Aorta (tissue), 5 donors: ENCODE measurements at regions of chr19 and their contacts with region 1.

Region 1: GRCh38 chr19:12333162-12334159 is at the start of gene ZNF563:
- DNase-seq: peak; percentile 98
- ATAC-seq: peak; percentile 100
- H3K4me3 ChIP-seq: peak within 1 kb of the TSS; percentile 59 to 81
- H3K27ac ChIP-seq: peak within 1 kb of the TSS; percentile 25 to 93
- H3K4me1 ChIP-seq: no peaks in the 10 kb centered on the region
- H3K27me3 ChIP-seq: no peaks in the 10 kb centered on the region
- total RNA-seq, gene ZNF563: 2.5 to 5.4 TPM

Region 2: DNA sequence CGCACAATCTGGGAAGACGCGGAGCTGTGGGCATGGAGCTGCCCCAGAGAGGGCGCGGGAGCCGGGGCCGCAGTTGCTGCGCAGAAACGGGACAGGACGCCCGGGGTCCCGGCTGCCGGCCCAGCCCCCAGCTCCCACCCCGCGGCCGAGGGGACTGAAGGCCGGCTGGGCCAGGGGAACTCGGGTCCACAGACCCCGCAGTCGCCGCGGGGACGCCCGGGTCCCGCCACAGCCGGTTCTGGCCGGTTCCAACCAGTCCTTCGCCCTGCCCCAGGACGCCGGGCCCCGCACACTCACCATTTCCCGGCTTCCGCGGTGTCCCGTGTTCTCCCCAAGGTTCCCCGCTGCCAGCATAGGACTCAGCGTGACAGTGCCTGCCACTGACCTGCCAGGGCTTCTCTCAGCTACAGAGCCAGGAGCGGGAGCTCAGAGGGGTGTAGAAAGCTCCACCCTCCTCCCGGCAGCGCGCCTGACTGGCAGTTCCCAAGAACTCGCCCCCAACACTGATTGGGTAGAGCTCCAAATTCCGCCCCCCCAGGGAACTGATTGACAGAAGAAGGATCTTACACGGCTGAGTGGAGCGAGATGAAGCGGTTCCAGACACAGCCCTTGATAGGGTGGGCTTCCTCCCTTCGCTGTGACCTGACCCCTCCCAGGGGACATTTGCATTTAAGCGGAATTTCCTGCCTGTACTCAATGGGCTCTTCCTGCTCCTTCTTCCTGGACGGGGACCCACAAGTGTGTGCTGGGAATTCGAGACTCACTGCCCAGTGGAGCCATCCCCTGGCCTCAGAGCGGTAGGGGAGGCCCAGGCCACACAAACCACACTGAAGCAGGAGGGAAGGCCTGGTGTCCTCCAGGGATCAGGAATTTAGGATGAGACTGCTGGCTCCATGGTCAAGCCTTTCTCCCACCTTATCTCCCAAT is 32.0 kb after region 1 on chr19 and contains the start of gene ZNF442:
- intact Hi-C with region 1: loop called (anchors 1 to 5 kb)
- DNase-seq: peak; percentile 97 to 98
- ATAC-seq: peak; percentile 98
- H3K4me3 ChIP-seq: peak within 1 kb of the TSS; percentile 78 to 79
- H3K27ac ChIP-seq: peak within 1 kb of the TSS; percentile 84 to 91
- H3K4me1 ChIP-seq: no peaks in the 10 kb centered on the region
- H3K27me3 ChIP-seq: no peaks in the 10 kb centered on the region
- total RNA-seq, gene ZNF442: 3.6 to 4.5 TPM